ENCODE measurements at regions of chr2 and their contacts with region 1.

Region 1: DNA sequence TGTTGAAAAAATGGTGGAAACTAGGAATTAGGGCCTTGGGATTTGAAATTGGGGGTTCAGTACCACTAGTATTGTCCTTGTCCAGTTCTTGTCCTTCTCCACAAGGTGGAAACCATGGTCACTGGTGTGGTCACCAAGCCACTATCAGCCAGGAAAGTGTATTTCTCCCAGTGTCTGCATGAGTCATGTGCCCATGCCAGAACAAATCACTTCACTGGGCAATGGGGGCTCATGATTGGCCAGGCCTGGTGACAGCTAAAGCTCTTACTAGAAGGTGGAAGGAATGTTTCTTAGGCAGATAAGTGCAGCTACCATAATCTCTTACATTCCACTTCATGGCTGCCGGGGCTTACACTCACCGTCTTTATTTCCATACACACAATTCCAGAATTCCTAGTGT is 124.8 kb upstream of the TACR1 start:
- DNase-seq: no peak
- H3K4me3 ChIP-seq: no peak overlapping the region
- H3K27ac ChIP-seq: no peak overlapping the region
- H3K4me1 ChIP-seq: peaks cover 0 to 8% (median 4%) of the 10 kb centered on the region in 4 experiments; a peak in 5 of 7 replicates
- H3K27me3 ChIP-seq: no peaks in the 10 kb centered on the region
- CTCF ChIP-seq: no peak
- EP300 ChIP-seq: no peak
- POLR2A ChIP-seq: no peak
- RAD21 ChIP-seq: no peak

Region 2: GRCh38 chr2:75002007-75002406 is 322.1 kb before region 1 on chr2:
- CTCF ChIA-PET with region 1: no interaction called
- POLR2A ChIA-PET with region 1: no interaction called
- DNase-seq: no peak
- H3K4me3 ChIP-seq: no peak overlapping the region
- H3K27ac ChIP-seq: no peak overlapping the region
- H3K4me1 ChIP-seq: no peaks in the 10 kb centered on the region
- H3K27me3 ChIP-seq: no peaks in the 10 kb centered on the region
- CTCF ChIP-seq: no peak
- EP300 ChIP-seq: no peak
- POLR2A ChIP-seq: no peak
- RAD21 ChIP-seq: no peak

Region 3: GRCh38 chr2:75310876-75311275 is 13.3 kb before region 1 on chr2:
- CTCF ChIA-PET with region 1: interaction called, 12 read pairs
- POLR2A ChIA-PET with region 1: no interaction called
- DNase-seq: no peak
- H3K4me3 ChIP-seq: no peak overlapping the region
- H3K27ac ChIP-seq: no peak overlapping the region
- H3K4me1 ChIP-seq: no peaks in the 10 kb centered on the region
- H3K27me3 ChIP-seq: peaks cover 0 to 1% (median 0%) of the 10 kb centered on the region in 4 experiments; a peak in 1 of 7 replicates
- CTCF ChIP-seq: no peak
- EP300 ChIP-seq: no peak
- POLR2A ChIP-seq: no peak
- RAD21 ChIP-seq: no peak

Region 4: DNA sequence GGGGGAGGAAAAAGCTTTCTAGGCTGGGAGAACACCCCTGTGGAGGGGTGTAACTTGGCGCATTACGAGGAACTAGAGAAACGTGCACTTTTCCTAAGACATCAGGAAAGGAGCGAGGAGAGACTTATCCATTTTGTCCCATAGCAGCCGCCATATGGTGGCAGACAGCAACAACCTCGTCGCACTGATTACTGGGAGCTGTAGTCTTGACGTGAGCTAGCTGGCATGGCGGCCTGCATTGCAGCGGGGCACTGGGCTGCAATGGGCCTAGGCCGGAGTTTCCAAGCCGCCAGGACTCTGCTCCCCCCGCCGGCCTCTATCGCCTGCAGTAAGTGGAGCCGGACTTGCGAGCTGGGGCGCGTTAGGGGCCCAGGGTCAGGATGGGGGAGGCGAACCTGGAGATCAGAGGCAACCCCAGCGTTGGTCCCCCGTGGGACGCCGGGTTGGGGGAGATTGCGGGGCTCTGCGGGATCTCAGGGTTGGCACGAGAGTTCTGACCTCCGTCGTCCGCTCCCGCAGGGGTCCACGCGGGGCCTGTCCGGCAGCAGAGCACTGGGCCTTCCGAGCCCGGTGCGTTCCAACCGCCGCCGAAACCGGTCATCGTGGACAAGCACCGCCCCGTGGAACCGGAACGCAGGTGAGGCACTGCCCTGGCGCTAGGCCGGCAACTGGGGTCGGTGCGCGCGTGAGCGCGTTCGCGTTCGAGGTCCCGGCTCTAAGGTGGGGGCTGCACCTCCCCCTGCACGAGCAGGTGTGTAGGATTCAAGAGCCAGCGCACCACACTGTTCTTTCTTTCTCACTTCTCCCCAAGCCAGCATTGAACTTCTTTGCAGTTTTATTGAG is 322.7 kb after region 1 on chr2 and contains the start of gene MRPL19:
- CTCF ChIA-PET with region 1: no interaction called
- POLR2A ChIA-PET with region 1: no interaction called
- DNase-seq: peak; percentile 44 to 78
- H3K4me3 ChIP-seq: peak within 1 kb of the TSS; percentile 93 to 97 (median 95)
- H3K27ac ChIP-seq: peak within 1 kb of the TSS; percentile 81
- H3K4me1 ChIP-seq: no peaks in the 10 kb centered on the region
- H3K27me3 ChIP-seq: no peaks in the 10 kb centered on the region
- CTCF ChIP-seq: 0 out of 4 replicates have a peak, but pooled peaks of 1 of the 3 experiments have one; percentile 13
- EP300 ChIP-seq: no peak
- POLR2A ChIP-seq: peak; percentile 78 to 84
- RAD21 ChIP-seq: no peak
- total RNA-seq, gene MRPL19: 71.5 and 75.2 TPM in 2 replicates